ENCODE measurements at regions of chr6 and their contacts with region 1.

Region 1: DNA sequence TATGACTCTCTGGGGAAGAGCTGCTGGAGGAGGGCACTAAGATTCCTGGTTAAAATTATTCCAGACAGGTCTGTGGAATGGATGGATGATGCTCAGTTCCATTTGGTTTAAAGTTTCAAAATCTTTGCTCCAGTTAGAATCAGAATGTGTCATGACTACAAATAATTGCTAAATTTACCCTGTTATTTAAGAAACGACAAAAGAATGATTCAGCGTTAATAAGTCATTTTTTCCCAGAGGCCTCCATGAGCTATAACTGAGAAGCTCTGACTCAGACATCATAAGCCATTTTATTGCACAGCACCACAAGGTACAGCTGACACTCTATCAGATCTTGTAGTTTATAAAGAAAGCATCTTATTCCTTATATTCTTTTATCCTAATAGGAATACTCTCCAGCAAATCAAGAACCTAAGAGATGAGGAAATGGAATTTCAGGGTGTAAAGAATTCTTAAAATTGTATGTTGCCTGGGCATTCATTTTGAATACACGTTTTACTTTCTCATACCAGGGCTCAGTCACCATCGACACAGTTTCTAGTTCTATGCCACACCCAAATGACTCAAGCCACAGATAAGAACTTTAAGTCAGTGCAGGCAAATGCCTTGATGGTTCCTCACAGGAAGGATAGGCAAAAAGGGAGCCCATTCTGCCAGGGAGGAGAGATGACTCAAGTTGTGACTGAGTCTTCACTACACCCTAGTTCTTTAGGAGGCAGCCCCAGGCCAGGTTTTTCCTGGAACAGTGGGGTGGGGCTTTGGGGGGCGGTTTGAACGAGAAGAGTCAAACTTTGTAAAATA is 636.0 kb downstream of the MMUT start:
- DNase-seq: peak; percentile 47 to 79
- ATAC-seq: peak; percentile 88
- H3K4me3 ChIP-seq: no peak overlapping the region
- H3K27ac ChIP-seq: peak overlapping the region; percentile 39 to 47
- H3K4me1 ChIP-seq: peaks cover 0 to 4% of the 10 kb centered on the region in 2 donors
- H3K27me3 ChIP-seq: no peaks in the 10 kb centered on the region

Region 2: DNA sequence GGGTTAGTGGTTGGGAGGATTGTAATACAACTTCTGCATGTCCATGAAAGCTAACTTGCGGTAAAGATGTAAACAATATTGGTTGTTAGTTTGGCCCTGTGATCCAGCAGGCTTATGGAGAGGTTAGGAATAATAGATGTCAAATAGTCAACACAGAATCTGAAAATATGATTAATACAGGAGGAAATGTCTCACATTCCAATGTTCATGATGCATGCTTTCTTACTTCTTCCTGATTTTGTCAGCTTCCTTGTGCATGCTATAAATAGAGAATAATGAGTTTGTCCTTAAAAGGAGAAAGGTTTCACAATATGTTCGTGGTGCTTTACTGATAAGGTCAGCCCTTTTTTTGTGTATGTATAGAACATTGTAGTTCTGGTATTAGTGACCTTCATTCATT is 499.2 kb after region 1 on chr6:
- intact Hi-C with region 1: loop called in 1 of 2 experiments (anchors 10 kb)
- DNase-seq: no peak
- ATAC-seq: no peak
- H3K4me3 ChIP-seq: no peak overlapping the region
- H3K27ac ChIP-seq: peak overlapping the region in 1 of 2 donors; percentile 5
- H3K4me1 ChIP-seq: peaks cover 2 to 4% of the 10 kb centered on the region in 2 donors
- H3K27me3 ChIP-seq: no peaks in the 10 kb centered on the region